ENCODE measurements at regions of chr12 and their contacts with region 1.

Region 1: GRCh38 chr12:64256166-64256800 is 34.2 kb upstream of the KICS2 start:
- DNase-seq: no peak
- ATAC-seq: peak; percentile 63
- H3K4me3 ChIP-seq: no peak overlapping the region
- H3K27ac ChIP-seq: no peak overlapping the region
- H3K4me1 ChIP-seq: no peaks in the 10 kb centered on the region
- H3K27me3 ChIP-seq: no peaks in the 10 kb centered on the region
- CTCF ChIP-seq: peak; percentile 38 to 72 (median 46); a peak in 5 of 6 replicates
- EP300 ChIP-seq: no peak
- POLR2A ChIP-seq: no peak
- RAD21 ChIP-seq: peak; percentile 91

Region 2: DNA sequence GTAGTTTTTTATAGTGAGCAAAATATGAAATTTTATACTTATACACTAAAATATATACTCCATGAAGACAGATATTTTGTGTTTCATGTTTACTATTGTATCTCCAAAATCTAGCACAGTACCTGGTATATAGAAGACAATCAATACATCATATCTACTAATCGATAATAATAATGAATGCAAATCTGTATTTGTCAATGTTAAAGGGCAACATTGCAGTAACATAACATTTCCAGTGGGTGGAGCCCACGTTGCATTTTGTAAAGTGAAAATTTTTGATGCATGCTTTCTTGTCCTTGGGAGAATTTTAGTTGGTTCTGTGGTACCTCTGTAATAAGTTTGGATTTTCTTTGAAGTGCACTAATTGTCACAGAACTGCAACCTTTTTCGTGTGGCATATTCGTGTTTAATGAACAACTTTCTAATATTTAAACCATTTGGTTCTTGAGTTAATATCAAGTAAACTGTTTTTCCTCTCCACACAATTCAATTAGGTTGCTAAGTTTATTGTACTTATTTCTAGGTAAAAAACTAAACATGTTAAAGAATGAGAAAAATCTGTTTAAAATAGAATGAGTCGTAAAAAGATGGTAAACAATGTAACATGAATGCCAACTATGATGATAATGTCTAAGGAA is 1152.7 kb before region 1 on chr12:
- CTCF ChIA-PET with region 1: no interaction called
- POLR2A ChIA-PET with region 1: no interaction called
- RAD21 ChIA-PET with region 1: no interaction called
- SMC1A ChIA-PET with region 1: no interaction called
- in situ Hi-C with region 1: loop called (anchors 25 kb)
- intact Hi-C with region 1: loop called (anchors 5 kb)
- DNase-seq: no peak
- ATAC-seq: peak; percentile 35; the same call in 2 of the 3 replicates
- H3K4me3 ChIP-seq: no peak overlapping the region
- H3K27ac ChIP-seq: no peak overlapping the region
- H3K4me1 ChIP-seq: no peaks in the 10 kb centered on the region
- H3K27me3 ChIP-seq: no peaks in the 10 kb centered on the region
- CTCF ChIP-seq: peak; percentile 63 to 75 (median 70)
- EP300 ChIP-seq: no peak
- POLR2A ChIP-seq: no peak
- RAD21 ChIP-seq: peak; percentile 70

Region 3: DNA sequence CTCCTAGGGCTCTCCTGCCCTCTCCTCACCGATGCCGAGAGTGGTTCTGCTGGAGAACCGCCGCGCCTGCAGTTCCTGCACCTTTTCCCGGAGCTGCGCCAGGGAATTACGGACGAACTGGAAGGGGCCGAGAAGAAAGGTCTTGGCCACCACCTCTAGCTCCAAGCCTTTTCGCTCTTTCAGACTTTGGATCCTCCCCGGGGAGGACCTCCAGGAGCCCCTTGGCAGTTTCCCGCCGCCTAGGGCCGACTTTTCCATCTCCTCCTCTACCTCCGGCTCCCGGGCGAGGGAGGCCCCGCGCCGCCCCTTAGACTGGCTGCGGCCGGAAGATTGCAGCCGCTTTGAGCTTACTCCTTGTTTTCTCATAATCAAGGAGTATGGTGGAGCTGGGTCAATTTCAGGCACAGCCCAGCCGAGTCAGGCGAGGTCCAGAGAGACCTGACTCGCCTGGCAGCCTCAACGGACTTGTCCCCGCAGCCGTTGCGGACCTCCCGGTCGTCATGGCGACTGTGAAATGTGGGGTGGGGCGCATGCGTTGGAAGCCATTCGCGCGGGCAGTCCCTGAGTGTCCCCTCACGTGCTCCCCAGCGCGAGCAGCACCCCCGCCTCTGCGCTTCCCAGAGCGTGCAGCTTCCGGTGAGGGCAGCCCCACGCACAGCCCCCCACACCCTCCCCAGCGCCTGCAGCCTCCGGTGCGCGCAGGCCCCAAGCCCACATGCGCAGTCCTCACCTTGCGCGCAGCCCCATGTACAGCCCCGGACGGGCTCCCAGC is 588.1 kb before region 1 on chr12 and contains the start of gene DPY19L2:
- CTCF ChIA-PET with region 1: interaction called, 3 read pairs
- POLR2A ChIA-PET with region 1: no interaction called
- RAD21 ChIA-PET with region 1: no interaction called
- SMC1A ChIA-PET with region 1: no interaction called
- in situ Hi-C with region 1: loop called (anchors 10 kb)
- intact Hi-C with region 1: loop called (anchors 5 kb)
- DNase-seq: no peak
- ATAC-seq: peak; percentile 89
- H3K4me3 ChIP-seq: peak within 1 kb of the TSS; percentile 55; the same call in 1 of the 2 replicates
- H3K27ac ChIP-seq: no peak within 1 kb of the TSS
- H3K4me1 ChIP-seq: no peaks in the 10 kb centered on the region
- H3K27me3 ChIP-seq: peaks cover 0 to 5% of the 10 kb centered on the region in 2 experiments; a peak in 2 of 4 replicates
- CTCF ChIP-seq: no peak
- EP300 ChIP-seq: no peak
- POLR2A ChIP-seq: no peak
- RAD21 ChIP-seq: no peak
- polyA plus RNA-seq, gene DPY19L2: not detected

Region 4: DNA sequence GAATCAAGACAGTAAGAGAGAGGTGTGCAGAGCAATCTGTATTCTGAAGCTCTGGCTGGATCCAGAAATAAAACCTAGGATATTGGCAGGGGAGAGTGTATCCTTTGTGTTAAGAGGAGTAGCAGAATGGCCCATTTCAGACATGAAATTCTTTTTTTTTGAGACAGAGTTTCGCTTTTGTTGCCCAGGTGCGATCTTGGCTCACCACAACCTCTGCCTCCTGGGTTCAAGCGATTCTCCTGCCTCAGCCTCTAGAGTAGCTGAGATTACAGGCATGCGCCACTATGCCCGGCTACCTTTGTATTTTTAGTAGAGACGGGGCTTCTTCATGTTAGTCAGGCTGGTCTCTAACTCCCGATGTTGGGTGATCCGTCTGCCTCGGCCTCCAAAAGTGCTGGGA is 417.9 kb before region 1 on chr12:
- CTCF ChIA-PET with region 1: interaction called, 29 read pairs
- POLR2A ChIA-PET with region 1: interaction called, 3 read pairs
- RAD21 ChIA-PET with region 1: interaction called, 6 read pairs
- SMC1A ChIA-PET with region 1: interaction called, 13 read pairs
- in situ Hi-C with region 1: loop called (anchors 5 kb)
- intact Hi-C with region 1: loop called (anchors 1 kb)
- DNase-seq: no peak
- ATAC-seq: no peak
- H3K4me3 ChIP-seq: no peak overlapping the region
- H3K27ac ChIP-seq: no peak overlapping the region
- H3K4me1 ChIP-seq: 0 out of 2 replicates have a peak, but pooled peaks cover 3% of the 10 kb centered on the region
- H3K27me3 ChIP-seq: no peaks in the 10 kb centered on the region; a peak in 1 of 4 replicates
- CTCF ChIP-seq: no peak
- EP300 ChIP-seq: no peak
- POLR2A ChIP-seq: no peak
- RAD21 ChIP-seq: no peak

Region 5: GRCh38 chr12:64056741-64057140 is 199.5 kb before region 1 on chr12:
- CTCF ChIA-PET with region 1: no interaction called
- POLR2A ChIA-PET with region 1: no interaction called
- RAD21 ChIA-PET with region 1: no interaction called
- SMC1A ChIA-PET with region 1: no interaction called
- in situ Hi-C with region 1: no loop called
- intact Hi-C with region 1: no loop called
- DNase-seq: no peak
- ATAC-seq: no peak
- H3K4me3 ChIP-seq: no peak overlapping the region
- H3K27ac ChIP-seq: no peak overlapping the region
- H3K4me1 ChIP-seq: no peaks in the 10 kb centered on the region
- H3K27me3 ChIP-seq: no peaks in the 10 kb centered on the region
- CTCF ChIP-seq: no peak
- EP300 ChIP-seq: no peak
- POLR2A ChIP-seq: no peak
- RAD21 ChIP-seq: no peak

Region 6: DNA sequence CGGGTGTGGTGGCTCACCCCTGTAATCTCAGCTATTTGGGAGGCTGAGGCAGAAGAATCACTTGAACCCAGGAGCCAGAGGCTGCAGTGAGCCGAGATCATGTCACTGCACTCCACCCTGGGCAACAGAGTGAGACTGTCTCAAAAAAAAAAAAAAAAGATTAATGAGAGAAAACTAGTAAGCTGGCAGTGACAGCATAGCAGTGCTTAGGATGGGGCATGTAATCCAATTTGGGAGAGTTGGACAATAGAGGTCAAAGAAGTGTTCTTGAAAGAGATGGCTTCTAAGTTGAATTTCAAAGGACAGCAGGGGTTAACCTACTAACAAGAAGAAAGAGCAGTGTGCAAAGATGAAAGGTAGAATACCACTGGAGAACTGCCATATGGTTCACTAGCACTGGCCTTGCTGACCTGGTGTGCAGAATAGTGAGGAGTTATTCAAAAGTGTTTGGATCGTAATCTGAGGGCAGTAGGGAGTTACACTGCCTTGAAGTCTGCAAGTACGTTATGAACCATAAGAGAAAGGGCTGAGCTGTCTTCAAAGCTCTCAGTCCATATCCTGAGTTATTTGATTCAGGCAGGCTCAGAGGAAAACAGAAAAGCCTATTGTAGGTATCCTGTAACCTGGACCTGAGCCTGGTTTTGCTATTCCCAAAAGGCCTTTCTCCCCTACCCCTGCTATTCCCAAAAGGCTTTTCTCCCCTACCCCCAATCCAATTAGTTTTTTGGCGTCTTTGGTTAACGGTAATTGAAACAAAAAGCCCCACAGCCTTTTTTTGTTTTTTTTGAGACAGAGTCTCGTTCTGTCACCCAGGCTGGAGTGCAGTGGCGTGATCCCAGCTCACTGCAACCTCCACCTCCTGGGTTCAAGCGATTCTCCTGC is 151.3 kb after region 1 on chr12:
- CTCF ChIA-PET with region 1: no interaction called
- POLR2A ChIA-PET with region 1: no interaction called
- RAD21 ChIA-PET with region 1: no interaction called
- SMC1A ChIA-PET with region 1: no interaction called
- in situ Hi-C with region 1: no loop called
- intact Hi-C with region 1: no loop called
- DNase-seq: no peak
- ATAC-seq: no peak
- H3K4me3 ChIP-seq: no peak overlapping the region
- H3K27ac ChIP-seq: no peak overlapping the region
- H3K4me1 ChIP-seq: peaks cover 4% of the 10 kb centered on the region
- H3K27me3 ChIP-seq: no peaks in the 10 kb centered on the region
- CTCF ChIP-seq: no peak
- EP300 ChIP-seq: no peak
- POLR2A ChIP-seq: no peak
- RAD21 ChIP-seq: no peak

Region 7: GRCh38 chr12:65791400-65791799 is 1535.1 kb after region 1 on chr12:
- CTCF ChIA-PET with region 1: no interaction called
- POLR2A ChIA-PET with region 1: interaction called, 11 read pairs
- RAD21 ChIA-PET with region 1: no interaction called
- SMC1A ChIA-PET with region 1: no interaction called
- in situ Hi-C with region 1: no loop called
- intact Hi-C with region 1: no loop called
- DNase-seq: no peak
- ATAC-seq: no peak
- H3K4me3 ChIP-seq: no peak overlapping the region
- H3K27ac ChIP-seq: no peak overlapping the region
- H3K4me1 ChIP-seq: no peaks in the 10 kb centered on the region
- H3K27me3 ChIP-seq: 0 out of 4 replicates have a peak, but pooled peaks cover 0 to 1% of the 10 kb centered on the region in 2 experiments
- CTCF ChIP-seq: no peak
- EP300 ChIP-seq: no peak
- POLR2A ChIP-seq: no peak
- RAD21 ChIP-seq: no peak

Measured in GM12878 (cell line).